ENCODE measurements at regions of chr12 and their contacts with region 1.

Region 1: GRCh38 chr12:68686595-68687521 is at the start of gene NUP107:
- DNase-seq: peak; percentile 98
- ATAC-seq: peak; percentile 97
- H3K4me3 Mint-ChIP-seq: peak within 1 kb of the TSS; percentile 89
- H3K27ac Mint-ChIP-seq: peak within 1 kb of the TSS; percentile 97
- H3K4me1 Mint-ChIP-seq: peaks cover 34% of the 10 kb centered on the region
- H3K27me3 Mint-ChIP-seq: no peaks in the 10 kb centered on the region
- total RNA-seq, gene NUP107: 136 to 142 TPM

Region 2: GRCh38 chr12:67447180-67447579 is 1239.7 kb before region 1 on chr12:
- CTCF ChIA-PET with region 1: no interaction called
- POLR2A ChIA-PET with region 1: interaction called, 12 read pairs
- intact Hi-C with region 1: no loop called
- DNase-seq: no peak
- ATAC-seq: no peak
- H3K4me3 Mint-ChIP-seq: no peak overlapping the region
- H3K27ac Mint-ChIP-seq: no peak overlapping the region
- H3K4me1 Mint-ChIP-seq: peaks cover 42% of the 10 kb centered on the region
- H3K27me3 Mint-ChIP-seq: peaks cover 10% of the 10 kb centered on the region

Region 3: DNA sequence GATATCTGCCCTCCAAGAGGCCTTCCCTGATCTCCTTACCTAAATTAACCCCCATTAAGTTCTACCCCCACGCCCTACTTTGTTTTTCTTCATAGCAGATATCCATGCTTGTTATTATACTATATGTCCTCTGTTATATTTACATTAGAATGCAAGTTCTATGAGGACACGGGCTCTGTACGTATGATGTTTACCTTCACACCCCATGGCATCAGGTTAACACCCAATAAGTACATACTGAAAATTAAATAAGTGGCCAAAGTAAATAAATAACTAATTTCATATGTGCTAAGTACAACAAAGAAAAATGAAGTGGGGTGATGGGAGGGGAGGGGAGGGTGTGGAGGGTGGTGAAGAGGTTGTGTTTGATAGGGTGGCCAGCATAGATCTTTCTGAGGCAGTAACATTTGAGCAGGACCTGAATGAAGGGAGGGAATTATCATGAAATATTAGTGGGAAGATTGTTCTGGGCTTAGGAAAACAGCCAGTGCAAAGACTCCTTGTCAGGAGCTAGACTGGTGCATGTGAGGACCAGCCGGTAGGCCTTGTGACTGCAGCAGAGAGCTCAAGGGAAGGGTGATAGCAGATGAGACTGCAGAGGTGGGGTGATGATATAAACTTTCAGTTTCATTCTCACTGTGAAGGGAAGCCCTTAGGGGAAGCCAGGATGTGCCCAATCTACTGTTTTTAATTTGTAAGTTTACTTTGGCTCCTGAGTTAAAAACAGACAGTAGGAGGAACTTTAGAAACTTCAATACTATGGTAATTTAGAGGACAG is 446.1 kb before region 1 on chr12:
- CTCF ChIA-PET with region 1: no interaction called
- POLR2A ChIA-PET with region 1: no interaction called
- intact Hi-C with region 1: loop called in 1 of 2 experiments (anchors 5 kb)
- DNase-seq: peak; percentile 73
- ATAC-seq: peak; percentile 97
- H3K4me3 Mint-ChIP-seq: peak overlapping the region; percentile 4
- H3K27ac Mint-ChIP-seq: peak overlapping the region; percentile 27
- H3K4me1 Mint-ChIP-seq: peaks cover 48% of the 10 kb centered on the region
- H3K27me3 Mint-ChIP-seq: peaks cover 2% of the 10 kb centered on the region

Region 4: DNA sequence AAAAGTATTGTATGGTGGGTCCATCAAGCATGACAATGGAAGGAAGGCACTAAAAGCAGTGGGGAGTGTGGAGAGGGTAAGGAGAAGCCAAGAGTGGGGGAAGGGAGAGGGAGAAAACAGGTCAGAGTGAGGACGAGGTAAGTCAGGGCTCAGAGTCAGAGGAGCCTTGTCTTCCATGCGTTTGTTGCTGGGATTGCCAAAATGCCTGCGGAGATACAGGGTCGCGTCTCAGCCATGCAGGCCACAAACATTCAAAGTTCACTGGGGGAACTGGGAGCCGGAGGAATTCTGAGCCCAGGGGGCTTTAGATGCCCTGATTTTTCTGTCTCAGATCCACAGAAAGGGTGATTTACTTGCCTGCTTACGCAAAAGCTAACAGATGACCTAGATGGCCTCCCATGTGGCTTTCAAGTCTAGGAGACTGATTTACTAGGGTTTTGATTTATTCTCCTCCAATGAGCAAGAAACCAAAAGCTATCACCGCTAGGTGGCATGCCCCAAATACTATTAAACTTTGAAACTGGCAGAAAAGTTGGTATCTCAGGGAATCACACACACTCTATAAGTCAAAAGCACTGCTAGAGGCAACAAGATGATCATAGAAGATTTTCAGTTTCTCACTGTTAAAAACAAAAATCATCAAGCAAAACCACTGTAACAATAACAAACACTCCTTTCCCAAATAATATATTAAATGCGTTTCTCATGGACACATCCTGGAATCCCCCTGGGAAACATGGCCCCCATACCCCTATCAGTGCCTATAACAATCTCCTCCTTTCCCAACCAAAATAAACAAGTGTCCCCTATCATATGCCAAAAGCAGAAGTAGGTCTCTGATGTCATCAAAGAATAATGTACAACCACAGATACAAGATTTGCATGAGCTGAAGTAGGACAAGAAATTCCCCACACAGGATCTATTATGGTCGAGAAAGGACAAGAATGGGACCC is 328.0 kb before region 1 on chr12:
- CTCF ChIA-PET with region 1: interaction called, 5 read pairs
- POLR2A ChIA-PET with region 1: no interaction called
- intact Hi-C with region 1: loop called (anchors 1 to 2 kb)
- DNase-seq: peak; percentile 78
- ATAC-seq: peak; percentile 80
- H3K4me3 Mint-ChIP-seq: no peak overlapping the region
- H3K27ac Mint-ChIP-seq: peak overlapping the region; percentile 13
- H3K4me1 Mint-ChIP-seq: peaks cover 29% of the 10 kb centered on the region
- H3K27me3 Mint-ChIP-seq: no peaks in the 10 kb centered on the region

Region 5: GRCh38 chr12:68675101-68675842 is 11.6 kb before region 1 on chr12:
- CTCF ChIA-PET with region 1: interaction called, 4 read pairs
- POLR2A ChIA-PET with region 1: no interaction called
- intact Hi-C with region 1: loop called in 1 of 2 experiments (anchors 1 kb)
- DNase-seq: peak; percentile 73
- ATAC-seq: peak; percentile 78
- H3K4me3 Mint-ChIP-seq: peak overlapping the region; percentile 41
- H3K27ac Mint-ChIP-seq: peak overlapping the region; percentile 89
- H3K4me1 Mint-ChIP-seq: peaks cover 48% of the 10 kb centered on the region
- H3K27me3 Mint-ChIP-seq: no peaks in the 10 kb centered on the region

Region 6: DNA sequence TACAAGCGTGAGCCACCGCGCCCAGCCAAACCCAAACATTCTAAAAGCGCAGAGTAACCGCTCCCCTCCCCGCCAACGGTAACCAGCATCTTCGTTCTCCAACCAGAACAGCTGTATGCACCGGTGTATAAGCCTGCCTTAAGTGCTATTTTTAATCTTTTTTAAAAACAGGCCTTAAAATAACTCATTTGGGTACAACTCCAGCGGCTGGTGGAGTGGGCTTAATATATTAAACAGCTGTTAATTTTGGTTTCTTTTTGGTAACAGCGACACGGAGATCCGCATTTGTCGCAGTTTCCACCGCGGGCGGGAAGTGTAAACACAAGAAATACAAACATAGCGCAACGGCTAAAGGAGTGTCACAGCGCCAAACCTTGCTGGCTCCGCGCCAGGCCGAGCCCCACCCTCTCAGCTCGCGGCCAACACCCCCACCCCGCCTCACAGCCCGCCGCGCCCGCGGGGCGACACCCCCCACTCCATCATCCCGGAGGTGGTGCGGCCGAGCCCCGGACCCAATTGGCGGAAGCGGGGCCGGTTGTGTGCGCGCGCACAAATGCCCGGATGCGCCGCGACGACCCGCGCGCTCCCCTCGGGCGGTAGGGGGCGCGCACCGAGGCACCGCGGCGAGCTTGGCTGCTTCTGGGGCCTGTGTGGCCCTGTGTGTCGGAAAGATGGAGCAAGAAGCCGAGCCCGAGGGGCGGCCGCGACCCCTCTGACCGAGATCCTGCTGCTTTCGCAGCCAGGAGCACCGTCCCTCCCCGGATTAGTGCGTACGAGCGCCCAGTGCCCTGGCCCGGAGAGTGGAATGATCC is 120.9 kb after region 1 on chr12 and contains the start of gene MDM2:
- CTCF ChIA-PET with region 1: interaction called, 8 read pairs
- POLR2A ChIA-PET with region 1: no interaction called
- intact Hi-C with region 1: loop called (anchors 1 to 2 kb)
- DNase-seq: peak; percentile 96
- ATAC-seq: peak; percentile 89
- H3K4me3 Mint-ChIP-seq: peak within 1 kb of the TSS; percentile 88
- H3K27ac Mint-ChIP-seq: peak within 1 kb of the TSS; percentile 99
- H3K4me1 Mint-ChIP-seq: peaks cover 34% of the 10 kb centered on the region
- H3K27me3 Mint-ChIP-seq: no peaks in the 10 kb centered on the region
- total RNA-seq, gene MDM2: 114 to 119 TPM

Measured in activated CD4-positive, alpha-beta T cell treated with anti-CD3 and anti-CD28 coated beads for 36 hours (primary cell).